Dorsolateral prefrontal cortex (tissue), 120 donors: ENCODE measurements at regions of chr17 and their contacts with region 1.

Region 1: GRCh38 chr17:20315821-20316220 is 151.5 kb downstream of the LGALS9B start:
- DNase-seq: no peak
- H3K4me3 ChIP-seq: no peak overlapping the region
- H3K27ac ChIP-seq: peak overlapping the region in 34 of 59 donors; percentile 1 to 66 (median 38)
- H3K27me3 ChIP-seq: no peaks in the 10 kb centered on the region
- CTCF ChIP-seq: no peak

Region 2: DNA sequence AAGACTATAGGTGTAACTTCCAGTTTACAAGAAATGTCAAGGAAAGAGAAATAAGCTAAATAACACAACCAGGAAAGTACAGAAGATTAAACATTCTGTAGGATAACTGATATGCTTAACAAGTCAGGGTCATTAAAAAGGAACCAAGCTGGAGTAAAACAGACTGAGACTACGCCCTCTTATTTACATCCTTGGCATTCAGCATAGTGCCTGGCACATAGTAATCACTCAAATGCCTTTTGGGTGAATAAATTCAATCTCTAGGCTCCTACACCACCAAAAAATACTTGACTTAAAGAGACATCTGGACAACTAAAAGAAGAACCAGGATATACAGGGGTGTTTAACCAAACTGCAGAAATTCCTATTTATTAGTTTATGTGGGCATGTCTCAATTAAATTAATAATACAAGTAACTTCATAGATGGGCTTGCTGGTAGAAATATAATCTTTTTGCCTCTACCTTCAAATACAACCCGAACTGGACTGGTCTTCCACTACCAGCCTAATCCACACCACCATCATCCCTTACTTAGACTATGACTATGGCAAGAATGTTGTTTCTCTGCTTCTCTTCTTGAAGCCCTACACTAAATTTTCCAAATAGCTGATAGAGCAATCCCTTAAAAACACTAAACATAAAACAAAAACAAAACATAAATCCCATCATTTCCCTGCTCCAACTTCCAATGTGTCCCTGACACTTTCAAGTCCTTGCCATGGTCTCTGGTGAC is 400.4 kb before region 1 on chr17:
- intact Hi-C with region 1: no loop called
- DNase-seq: no peak
- H3K4me3 ChIP-seq: no peak overlapping the region
- H3K27ac ChIP-seq: peak overlapping the region in 10 of 59 donors; percentile 5 to 56 (median 25)
- H3K27me3 ChIP-seq: no peaks in the 10 kb centered on the region
- CTCF ChIP-seq: no peak

Region 3: DNA sequence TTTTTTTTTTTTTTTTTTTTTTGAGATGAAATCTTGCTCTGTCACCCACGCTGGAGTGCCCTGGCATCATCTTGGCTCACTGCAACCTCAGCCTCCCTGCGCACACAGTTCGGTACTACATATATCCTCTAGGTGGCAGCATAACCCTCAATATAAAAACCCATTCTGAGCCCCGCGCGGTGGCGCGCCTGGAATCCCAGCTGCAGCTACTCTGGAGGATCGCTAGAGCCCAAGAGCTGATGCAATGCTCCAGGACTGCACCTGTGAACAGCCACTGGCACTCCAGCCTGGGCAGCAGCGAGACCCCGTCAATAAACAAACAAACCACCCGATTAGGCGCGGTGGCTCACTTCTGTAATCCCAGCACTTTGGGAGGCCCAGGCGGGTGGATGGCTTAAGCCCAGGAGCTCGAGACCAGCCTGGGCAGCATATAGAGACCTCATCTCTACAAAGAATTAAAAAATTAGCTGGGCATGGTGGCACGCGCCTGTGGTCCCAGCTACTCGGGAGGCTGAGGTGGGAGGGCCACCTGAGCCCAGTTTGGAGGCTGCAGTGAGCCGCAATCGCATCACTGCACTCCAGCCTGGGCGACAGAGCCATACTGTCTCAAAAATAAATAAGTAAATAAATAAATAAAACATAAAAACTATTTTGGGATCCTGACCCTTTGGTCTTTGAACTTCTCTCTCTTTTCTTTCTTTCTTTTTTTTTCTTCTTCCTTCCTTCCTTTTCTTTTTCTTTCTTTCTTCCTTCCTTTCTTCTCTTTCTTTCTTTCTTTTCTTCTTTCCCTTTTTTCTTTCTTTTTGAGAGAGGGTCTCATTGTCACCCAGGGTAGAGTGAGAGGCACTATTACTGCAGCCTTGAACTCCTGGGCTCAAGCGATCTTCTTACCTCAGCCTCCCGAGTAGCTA is 322.8 kb before region 1 on chr17:
- intact Hi-C with region 1: loop called (anchors 5 kb)
- DNase-seq: peak; percentile 83 to 94 (median 90)
- H3K4me3 ChIP-seq: peak overlapping the region in 58 of 59 donors; percentile 23 to 65 (median 47)
- H3K27ac ChIP-seq: peak overlapping the region in 51 of 59 donors; percentile 2 to 86 (median 74)
- H3K27me3 ChIP-seq: no peaks in the 10 kb centered on the region
- CTCF ChIP-seq: peak; percentile 79 to 97 (median 91)

Region 4: GRCh38 chr17:20028443-20028842 is 287.4 kb before region 1 on chr17:
- intact Hi-C with region 1: no loop called
- DNase-seq: no peak
- H3K4me3 ChIP-seq: no peak overlapping the region
- H3K27ac ChIP-seq: no peak overlapping the region
- H3K27me3 ChIP-seq: no peaks in the 10 kb centered on the region
- CTCF ChIP-seq: no peak

Region 5: GRCh38 chr17:20266806-20267458 is 48.9 kb before region 1 on chr17:
- intact Hi-C with region 1: loop called (anchors 5 kb)
- DNase-seq: no peak
- H3K4me3 ChIP-seq: no peak overlapping the region
- H3K27ac ChIP-seq: peak overlapping the region in 44 of 59 donors; percentile 4 to 83 (median 60)
- H3K27me3 ChIP-seq: no peaks in the 10 kb centered on the region
- CTCF ChIP-seq: no peak